Heart right ventricle (tissue), 16 donors: ENCODE measurements at regions of chr9 and their contacts with region 1.

Region 1: DNA sequence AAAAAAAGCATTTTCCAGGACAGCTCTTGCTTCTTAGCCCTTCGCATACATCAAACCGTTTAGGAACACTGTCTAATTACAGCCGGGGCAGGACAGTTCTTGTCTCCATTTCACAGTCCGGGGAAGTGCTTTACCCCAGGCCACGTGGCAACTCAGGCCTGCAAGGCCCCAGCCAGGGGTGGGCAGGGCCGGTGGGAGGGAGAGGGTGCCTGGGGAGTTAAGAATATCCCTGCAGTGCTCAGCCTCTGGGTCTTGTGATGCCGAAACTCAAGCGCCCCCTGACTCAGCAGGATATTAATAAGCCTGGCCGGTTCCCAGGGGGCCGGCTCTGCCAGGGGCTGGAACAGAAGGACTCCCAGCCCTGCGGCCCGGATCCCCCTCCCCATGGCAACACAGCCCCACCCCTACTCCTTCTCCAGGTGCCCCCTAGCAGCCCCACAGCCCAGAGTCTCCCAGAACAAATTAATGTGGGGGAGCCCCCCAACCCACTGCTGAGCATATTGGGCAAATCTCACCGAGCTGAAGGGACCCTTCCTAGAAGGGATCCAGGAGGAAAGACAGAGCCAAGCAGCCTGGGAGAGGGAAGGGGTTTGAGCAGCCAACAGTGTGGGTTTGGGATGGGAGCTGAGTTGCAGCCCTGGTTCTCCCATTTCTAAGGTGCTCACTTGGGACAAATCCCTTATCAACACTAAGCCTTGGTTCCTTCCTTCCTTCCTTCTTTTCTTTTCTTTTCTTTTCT is 45.3 kb downstream of the PLPP7 start:
- DNase-seq: peak; percentile 74 to 85
- ATAC-seq: peak; percentile 79 to 94 (median 90)
- H3K4me3 ChIP-seq: no peak overlapping the region
- H3K27ac ChIP-seq: peak overlapping the region; percentile 46 to 89 (median 78)
- H3K4me1 ChIP-seq: peaks cover 0 to 41% (median 19%) of the 10 kb centered on the region in 9 donors
- H3K27me3 ChIP-seq: no peaks in the 10 kb centered on the region
- CTCF ChIP-seq: no peak

Region 2: GRCh38 chr9:131053896-131054295 is 280.9 kb before region 1 on chr9:
- intact Hi-C with region 1: loop called in 7 of 10 experiments (anchors 2 to 10 kb)
- DNase-seq: no peak
- ATAC-seq: no peak
- H3K4me3 ChIP-seq: no peak overlapping the region
- H3K27ac ChIP-seq: no peak overlapping the region
- H3K4me1 ChIP-seq: peaks cover 0 to 10% (median 0%) of the 10 kb centered on the region in 9 donors
- H3K27me3 ChIP-seq: peaks cover 0 to 17% (median 0%) of the 10 kb centered on the region in 7 donors
- CTCF ChIP-seq: no peak

Region 3: DNA sequence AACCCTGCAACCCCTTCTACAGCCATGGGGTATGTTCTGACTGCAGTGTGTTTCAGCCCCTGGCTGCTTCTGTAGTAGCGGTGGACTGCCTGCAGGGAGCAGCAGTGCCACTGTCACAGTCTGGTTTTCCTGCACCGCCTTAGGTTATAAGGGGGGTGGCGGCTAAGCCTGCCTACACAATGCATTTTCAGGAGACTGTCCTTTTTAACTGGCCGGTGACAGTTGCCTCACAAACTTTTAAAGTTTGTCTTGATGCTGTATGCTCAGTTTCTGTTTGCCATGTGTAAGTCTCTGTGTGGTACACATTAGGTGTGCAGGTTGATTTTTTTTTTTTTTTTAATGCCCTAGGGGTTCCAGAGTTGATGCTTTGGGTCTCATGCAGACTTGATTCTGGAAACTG is 156.4 kb before region 1 on chr9:
- intact Hi-C with region 1: loop called (anchors 1 to 2 kb)
- DNase-seq: peak; percentile 67 to 71
- ATAC-seq: peak; percentile 88 to 95 (median 94)
- H3K4me3 ChIP-seq: no peak overlapping the region
- H3K27ac ChIP-seq: no peak overlapping the region
- H3K4me1 ChIP-seq: peaks cover 0 to 29% (median 17%) of the 10 kb centered on the region in 9 donors
- H3K27me3 ChIP-seq: no peaks in the 10 kb centered on the region
- CTCF ChIP-seq: peak; percentile 85 to 98 (median 93)

Region 4: DNA sequence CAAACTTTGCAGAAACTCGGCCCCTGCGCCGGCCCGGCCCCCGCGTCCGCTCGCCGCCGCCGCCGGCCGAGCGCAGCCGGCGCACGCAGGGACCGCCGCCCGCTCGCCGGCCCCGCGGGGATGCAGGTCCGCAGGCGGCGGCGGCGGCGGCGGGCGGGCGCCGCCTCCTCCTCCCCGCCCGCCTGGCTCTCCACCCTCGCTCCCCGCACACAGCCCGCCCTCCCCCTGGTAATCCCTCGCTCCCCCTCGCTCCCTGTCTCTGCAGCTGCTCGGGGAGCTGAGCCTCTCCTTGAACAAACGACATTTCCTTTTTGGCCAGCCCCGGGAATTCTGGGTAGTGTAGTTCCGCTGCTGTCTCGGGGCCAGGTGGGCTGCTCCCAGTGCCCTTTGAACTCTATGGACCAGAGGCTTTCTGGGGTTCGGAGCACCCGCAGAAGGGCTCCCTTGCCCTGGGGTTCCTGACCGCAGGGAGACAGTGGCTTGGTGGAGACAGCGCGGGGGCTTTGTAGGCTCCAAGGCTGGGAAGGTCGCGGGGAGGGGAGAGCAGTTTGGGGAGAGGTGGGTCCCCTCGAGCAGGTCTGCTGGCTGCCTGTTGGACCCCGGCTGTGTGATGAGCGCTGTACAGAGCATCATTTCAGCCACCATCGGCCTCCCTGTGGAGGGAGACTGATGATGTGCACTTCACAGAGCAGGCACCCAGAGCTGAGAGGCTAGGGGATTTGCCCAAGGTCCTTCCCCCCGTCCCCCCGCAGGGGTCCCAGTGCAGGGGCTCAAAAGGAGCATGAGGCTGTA is 56.7 kb before region 1 on chr9:
- intact Hi-C with region 1: loop called in 6 of 10 experiments (anchors 2 to 10 kb)
- DNase-seq: peak; percentile 87 to 92
- ATAC-seq: peak; percentile 40 to 70 (median 60)
- H3K4me3 ChIP-seq: peak overlapping the region; percentile 59 to 92 (median 84)
- H3K27ac ChIP-seq: peak overlapping the region; percentile 89 to 99 (median 98)
- H3K4me1 ChIP-seq: peaks cover 14 to 52% (median 33%) of the 10 kb centered on the region in 9 donors
- H3K27me3 ChIP-seq: peaks cover 0 to 30% (median 14%) of the 10 kb centered on the region in 7 donors
- CTCF ChIP-seq: no peak

Region 5: GRCh38 chr9:131297903-131298302 is 36.9 kb before region 1 on chr9:
- intact Hi-C with region 1: loop called in 2 of 10 experiments (anchors 2 to 5 kb)
- DNase-seq: no peak
- ATAC-seq: peak; percentile 32 to 79 (median 64)
- H3K4me3 ChIP-seq: no peak overlapping the region
- H3K27ac ChIP-seq: peak overlapping the region; percentile 76 to 98 (median 90)
- H3K4me1 ChIP-seq: peaks cover 8 to 93% (median 53%) of the 10 kb centered on the region in 9 donors
- H3K27me3 ChIP-seq: no peaks in the 10 kb centered on the region
- CTCF ChIP-seq: no peak

Region 6: GRCh38 chr9:131382850-131383729 is 48.3 kb after region 1 on chr9:
- intact Hi-C with region 1: no loop called
- DNase-seq: peak in 1 of 2 donors; percentile 73
- ATAC-seq: peak; percentile 90 to 97 (median 96)
- H3K4me3 ChIP-seq: no peak overlapping the region
- H3K27ac ChIP-seq: peak overlapping the region in 9 of 10 donors; percentile 23 to 84 (median 64)
- H3K4me1 ChIP-seq: peaks cover 0 to 23% (median 14%) of the 10 kb centered on the region in 9 donors
- H3K27me3 ChIP-seq: no peaks in the 10 kb centered on the region
- CTCF ChIP-seq: no peak